Activated CD4-positive, alpha-beta memory T cell treated with anti-CD3 and anti-CD28 coated beads for 36 hours (primary cell): ENCODE measurements at regions of chr1 and their contacts with region 1.

Region 1: DNA sequence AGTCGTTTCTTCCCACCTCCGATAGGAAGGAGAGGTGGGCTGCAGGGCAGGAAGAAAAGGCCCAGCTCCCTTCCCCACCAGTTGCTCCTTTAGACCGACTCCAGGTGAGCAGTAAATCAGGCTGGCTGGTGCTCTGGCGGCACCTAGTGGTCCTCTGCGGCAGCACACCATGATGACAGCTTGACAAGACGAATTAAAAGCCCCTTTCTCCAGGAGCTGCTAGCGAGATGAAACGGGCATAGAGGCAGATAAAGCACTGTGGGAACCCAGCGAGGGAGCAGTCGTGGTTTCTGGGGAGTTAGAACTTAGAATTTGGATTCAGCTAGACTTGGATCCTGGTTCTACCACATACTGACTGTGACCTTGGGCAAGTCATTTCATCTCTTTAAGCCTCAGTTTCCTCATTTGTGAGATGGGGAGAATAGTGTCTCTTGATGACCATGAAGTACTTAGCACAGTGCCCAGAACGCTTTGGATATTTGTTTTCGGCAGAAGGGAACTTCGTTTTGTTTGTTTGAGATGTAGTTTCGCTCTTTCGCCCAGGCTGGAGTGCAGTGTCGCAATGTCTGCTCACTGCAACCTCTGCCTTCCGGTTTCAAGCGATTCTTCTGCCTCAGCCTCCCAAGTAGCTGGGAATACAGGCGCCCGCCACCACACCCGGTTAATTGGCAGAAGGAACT is 21.8 kb upstream of the COL9A2 start:
- DNase-seq: peak; percentile 95
- H3K4me3 Mint-ChIP-seq: peak overlapping the region; percentile 4
- H3K27ac Mint-ChIP-seq: peak overlapping the region; percentile 2
- H3K4me1 Mint-ChIP-seq: peaks cover 45% of the 10 kb centered on the region
- H3K27me3 Mint-ChIP-seq: no peaks in the 10 kb centered on the region

Region 2: DNA sequence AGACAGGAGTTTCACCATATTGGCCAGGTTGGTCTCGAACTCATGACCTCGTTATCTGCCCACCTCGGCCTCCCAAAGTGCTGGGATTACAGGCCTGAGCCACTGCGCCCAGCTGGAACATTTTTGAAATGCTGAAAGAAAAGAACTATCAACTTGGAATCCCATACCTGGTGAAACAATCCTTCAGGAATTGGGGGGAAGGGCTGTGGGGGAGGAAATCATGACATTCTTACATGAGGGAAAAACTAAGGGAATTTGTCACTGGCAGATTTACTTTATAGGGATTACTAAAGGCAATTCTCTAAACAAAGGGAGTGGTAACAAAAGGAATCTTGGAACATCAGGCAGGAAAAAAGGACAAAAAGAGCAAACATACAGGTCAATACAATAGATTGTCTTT is 1286.9 kb before region 1 on chr1:
- CTCF ChIA-PET with region 1: no interaction called
- POLR2A ChIA-PET with region 1: no interaction called
- intact Hi-C with region 1: no loop called
- DNase-seq: no peak
- H3K4me3 Mint-ChIP-seq: no peak overlapping the region
- H3K27ac Mint-ChIP-seq: no peak overlapping the region
- H3K4me1 Mint-ChIP-seq: peaks cover 4% of the 10 kb centered on the region
- H3K27me3 Mint-ChIP-seq: no peaks in the 10 kb centered on the region

Region 3: DNA sequence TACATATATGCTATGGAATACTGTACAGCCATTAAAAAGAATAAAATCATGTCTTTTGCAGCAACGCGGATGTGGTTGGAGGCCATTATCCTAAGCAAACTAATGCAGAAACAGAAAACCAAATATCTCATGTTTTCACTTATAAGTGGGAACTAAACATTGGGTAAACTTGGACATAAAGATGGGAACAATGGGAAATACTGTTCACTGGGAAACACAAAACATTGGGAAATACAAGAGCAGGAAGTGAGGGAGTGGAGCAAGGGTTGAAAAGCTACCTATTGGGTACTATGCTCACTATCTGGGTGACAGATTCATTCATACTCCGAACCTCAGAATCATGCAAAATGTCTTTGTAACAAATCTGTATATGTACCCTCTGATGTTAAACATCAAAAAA is 224.5 kb before region 1 on chr1:
- CTCF ChIA-PET with region 1: no interaction called
- POLR2A ChIA-PET with region 1: no interaction called
- intact Hi-C with region 1: no loop called
- DNase-seq: no peak
- H3K4me3 Mint-ChIP-seq: no peak overlapping the region
- H3K27ac Mint-ChIP-seq: no peak overlapping the region
- H3K4me1 Mint-ChIP-seq: no peaks in the 10 kb centered on the region
- H3K27me3 Mint-ChIP-seq: peaks cover 26% of the 10 kb centered on the region

Region 4: GRCh38 chr1:40143891-40144575 is 194.9 kb before region 1 on chr1:
- CTCF ChIA-PET with region 1: interaction called, 282 read pairs
- POLR2A ChIA-PET with region 1: interaction called, 5 read pairs
- intact Hi-C with region 1: loop called (anchors 1 kb)
- DNase-seq: peak; percentile 55
- H3K4me3 Mint-ChIP-seq: no peak overlapping the region
- H3K27ac Mint-ChIP-seq: no peak overlapping the region
- H3K4me1 Mint-ChIP-seq: peaks cover 8% of the 10 kb centered on the region
- H3K27me3 Mint-ChIP-seq: peaks cover 26% of the 10 kb centered on the region

Region 5: GRCh38 chr1:40161125-40161887 is 177.6 kb before region 1 on chr1 and contains the start of gene RLF:
- CTCF ChIA-PET with region 1: interaction called, 19 read pairs
- POLR2A ChIA-PET with region 1: interaction called, 5 read pairs
- intact Hi-C with region 1: no loop called
- DNase-seq: peak; percentile 97
- H3K4me3 Mint-ChIP-seq: no peak within 1 kb of the TSS
- H3K27ac Mint-ChIP-seq: no peak within 1 kb of the TSS
- H3K4me1 Mint-ChIP-seq: peaks cover 4% of the 10 kb centered on the region
- H3K27me3 Mint-ChIP-seq: no peaks in the 10 kb centered on the region
- total RNA-seq, gene RLF: 19.6 to 19.7 TPM

Region 6: DNA sequence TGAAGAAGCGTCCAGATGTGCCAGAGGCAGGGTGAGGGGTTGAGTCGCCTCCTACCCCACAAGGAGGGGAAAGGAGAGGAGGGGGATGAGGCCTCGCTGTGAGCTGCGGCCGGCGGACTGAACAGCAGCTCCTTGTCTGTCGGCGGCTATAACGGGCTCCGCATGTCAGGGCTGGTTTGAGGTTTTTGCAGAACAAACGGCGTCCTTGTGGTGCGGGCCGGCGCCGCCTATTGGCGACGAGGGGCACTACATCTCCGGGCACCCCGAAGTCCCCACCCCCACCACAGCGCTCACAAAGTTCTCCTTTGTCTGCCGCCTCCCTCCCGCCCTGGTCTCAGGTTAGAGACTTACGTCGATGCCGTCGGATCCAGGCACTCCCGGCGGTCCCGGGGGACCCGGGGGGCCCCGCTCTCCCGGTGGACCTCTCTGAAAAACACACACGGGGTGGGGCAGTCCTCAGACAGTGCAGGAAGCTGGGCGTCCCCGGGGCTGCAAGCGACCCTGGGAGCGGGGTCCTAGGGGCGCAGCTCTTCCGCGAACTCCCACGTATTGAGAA is 23.6 kb before region 1 on chr1:
- CTCF ChIA-PET with region 1: interaction called, 96 read pairs
- POLR2A ChIA-PET with region 1: interaction called, 3 read pairs
- intact Hi-C with region 1: loop called (anchors 2 kb)
- DNase-seq: peak; percentile 91
- H3K4me3 Mint-ChIP-seq: peak overlapping the region; percentile 85
- H3K27ac Mint-ChIP-seq: no peak overlapping the region
- H3K4me1 Mint-ChIP-seq: peaks cover 47% of the 10 kb centered on the region
- H3K27me3 Mint-ChIP-seq: peaks cover 9% of the 10 kb centered on the region

Region 7: DNA sequence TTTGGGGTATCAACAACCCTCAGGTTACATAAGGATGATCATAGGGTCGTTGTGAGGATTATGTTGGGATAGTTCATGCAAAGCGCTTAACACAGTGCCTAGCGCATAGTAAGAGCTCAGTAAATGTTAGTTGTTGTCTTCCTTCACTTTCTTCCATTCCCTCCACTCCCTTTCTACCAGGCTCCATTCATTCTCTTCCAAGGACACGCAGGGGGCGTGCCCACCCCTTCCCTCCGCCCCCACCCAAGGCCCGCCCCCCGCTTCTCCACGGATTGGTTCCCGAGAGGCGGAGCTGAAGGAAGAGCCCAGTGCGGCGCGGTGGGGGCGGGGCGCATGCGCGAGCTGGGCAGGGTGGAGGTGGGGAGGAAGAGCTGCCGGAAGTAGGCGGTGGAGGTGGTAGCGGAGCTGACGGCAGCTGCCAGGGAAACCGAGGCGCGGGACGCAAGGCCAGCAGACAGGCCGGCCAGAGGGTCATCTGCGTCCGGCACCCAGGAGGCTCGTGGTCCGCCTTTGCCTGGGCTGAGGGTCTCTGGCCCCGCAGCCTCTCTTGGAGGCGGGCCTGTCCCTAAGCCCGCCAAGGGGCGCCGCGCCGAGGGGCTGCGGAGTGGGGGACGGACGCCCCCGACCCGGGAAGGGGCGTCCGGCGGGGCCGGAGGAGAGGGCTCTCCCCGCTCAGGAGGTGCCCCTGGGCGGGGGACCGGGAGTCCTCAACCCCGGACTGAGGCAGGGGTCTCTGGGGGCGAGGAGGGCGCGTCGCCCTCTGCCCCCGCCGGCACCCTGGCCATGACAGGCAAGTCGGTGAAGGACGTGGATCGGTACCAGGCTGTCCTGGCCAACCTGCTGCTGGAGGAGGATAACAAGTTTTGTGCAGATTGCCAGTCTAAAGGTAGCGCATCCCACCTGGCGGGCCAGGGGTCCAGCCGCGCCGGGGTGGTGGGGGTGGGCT is 34.7 kb after region 1 on chr1 and contains the start of gene SMAP2:
- CTCF ChIA-PET with region 1: interaction called, 19 read pairs
- POLR2A ChIA-PET with region 1: interaction called, 21 read pairs
- intact Hi-C with region 1: no loop called
- DNase-seq: peak; percentile 98
- H3K4me3 Mint-ChIP-seq: peak within 1 kb of the TSS; percentile 97
- H3K27ac Mint-ChIP-seq: peak within 1 kb of the TSS; percentile 99
- H3K4me1 Mint-ChIP-seq: peaks cover 44% of the 10 kb centered on the region
- H3K27me3 Mint-ChIP-seq: peaks cover 1% of the 10 kb centered on the region
- total RNA-seq, gene SMAP2: 250 to 254 TPM

Region 8: DNA sequence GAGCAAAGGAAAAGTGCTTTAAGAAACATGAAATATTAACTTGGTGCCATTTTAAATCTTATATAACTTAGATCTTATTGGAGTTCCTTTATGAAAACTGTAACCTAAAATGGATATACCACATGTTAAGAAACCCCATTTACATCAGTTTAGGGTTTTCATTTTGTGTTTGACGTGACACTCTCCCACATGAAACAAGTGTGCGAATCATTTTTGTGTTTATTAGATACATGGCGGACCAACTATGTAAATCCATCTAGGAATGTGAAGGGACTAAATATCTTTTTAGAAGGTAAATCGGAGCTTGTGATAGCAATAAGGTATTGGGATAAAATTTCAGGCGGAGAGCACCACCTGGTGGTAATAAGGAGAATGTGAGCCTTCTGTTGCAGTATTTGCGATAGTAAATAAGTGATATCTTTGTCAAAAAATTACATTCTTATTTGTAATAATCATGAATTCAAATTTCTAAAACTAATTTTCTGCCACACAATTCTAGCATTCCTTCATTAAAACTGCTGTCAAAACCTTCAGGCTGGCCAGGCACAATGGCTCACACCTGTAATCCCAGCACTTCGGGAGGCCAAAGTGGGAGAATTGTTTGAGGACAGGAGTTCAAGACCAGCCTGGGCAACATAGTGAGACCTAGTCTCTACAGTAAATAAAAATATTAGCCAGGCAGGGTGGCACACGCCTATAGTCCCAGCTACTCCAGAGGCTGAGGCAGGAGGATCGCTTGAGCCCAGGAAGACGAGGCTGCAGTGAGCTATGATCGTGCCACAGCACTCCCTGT is 66.0 kb after region 1 on chr1:
- CTCF ChIA-PET with region 1: interaction called, 188 read pairs
- POLR2A ChIA-PET with region 1: interaction called, 5 read pairs
- intact Hi-C with region 1: loop called (anchors 1 kb)
- DNase-seq: peak; percentile 49
- H3K4me3 Mint-ChIP-seq: peak overlapping the region; percentile 52
- H3K27ac Mint-ChIP-seq: peak overlapping the region; percentile 88
- H3K4me1 Mint-ChIP-seq: peaks cover 72% of the 10 kb centered on the region
- H3K27me3 Mint-ChIP-seq: no peaks in the 10 kb centered on the region

Region 9: GRCh38 chr1:40438391-40439015 is 99.6 kb after region 1 on chr1:
- CTCF ChIA-PET with region 1: interaction called, 14 read pairs
- POLR2A ChIA-PET with region 1: no interaction called
- intact Hi-C with region 1: no loop called
- DNase-seq: no peak
- H3K4me3 Mint-ChIP-seq: no peak overlapping the region
- H3K27ac Mint-ChIP-seq: no peak overlapping the region
- H3K4me1 Mint-ChIP-seq: no peaks in the 10 kb centered on the region
- H3K27me3 Mint-ChIP-seq: no peaks in the 10 kb centered on the region